Motor neuron (in vitro differentiated cells): ENCODE measurements at regions of chr3 and their contacts with region 1.

Region 1: DNA sequence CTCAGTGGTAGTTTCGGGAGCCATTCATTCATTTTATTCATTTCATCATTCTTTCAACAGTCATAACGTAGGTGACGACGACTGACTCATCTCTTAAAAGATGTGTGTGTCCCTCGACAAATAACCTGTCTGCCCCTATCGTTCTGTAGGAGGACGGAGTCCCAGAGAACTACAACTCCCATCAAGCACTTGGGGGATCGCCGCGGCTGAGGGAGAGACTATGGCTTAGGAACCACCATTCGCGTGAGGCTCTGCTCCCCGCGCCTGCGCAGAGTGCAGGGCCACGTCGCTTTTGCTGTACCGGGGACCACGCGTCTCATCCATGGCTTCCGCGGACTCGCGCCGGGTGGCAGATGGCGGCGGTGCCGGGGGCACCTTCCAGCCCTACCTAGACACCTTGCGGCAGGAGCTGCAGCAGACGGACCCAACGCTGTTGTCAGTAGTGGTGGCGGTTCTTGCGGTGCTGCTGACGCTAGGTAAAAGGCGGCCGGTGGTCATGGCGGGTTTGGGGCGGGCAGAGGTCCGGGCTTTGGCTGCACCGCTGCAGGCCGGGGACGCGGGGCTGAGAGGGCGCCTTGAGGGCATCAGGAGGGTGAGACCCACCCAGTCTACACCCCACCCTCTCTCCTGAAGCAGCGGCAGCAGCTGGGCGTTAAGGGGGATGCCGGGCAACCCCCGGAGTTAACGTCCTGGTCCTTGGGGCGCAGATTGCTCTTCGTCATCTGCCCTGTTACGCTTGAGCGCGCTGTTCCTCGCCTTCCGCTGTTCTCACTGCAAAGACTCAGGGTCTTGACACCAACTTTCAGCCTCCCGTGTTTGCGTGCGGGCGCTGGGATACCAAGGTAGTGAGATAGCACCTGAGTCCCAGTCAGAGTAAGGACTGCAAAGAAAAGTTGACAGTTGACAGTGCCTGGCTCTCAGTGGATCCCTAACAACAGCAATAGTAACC is at the start of gene SRPRB:
- ATAC-seq: peak; percentile 95 to 99 (median 97)
- H3K4me3 ChIP-seq: peak within 1 kb of the TSS; percentile 70 to 94 (median 83)
- H3K27ac ChIP-seq: peak within 1 kb of the TSS; percentile 88 to 96
- H3K4me1 ChIP-seq: peaks cover 0 to 7% of the 10 kb centered on the region in 2 donors
- total RNA-seq, gene SRPRB: 39.2 to 150 (median 62.6) TPM

Region 2: DNA sequence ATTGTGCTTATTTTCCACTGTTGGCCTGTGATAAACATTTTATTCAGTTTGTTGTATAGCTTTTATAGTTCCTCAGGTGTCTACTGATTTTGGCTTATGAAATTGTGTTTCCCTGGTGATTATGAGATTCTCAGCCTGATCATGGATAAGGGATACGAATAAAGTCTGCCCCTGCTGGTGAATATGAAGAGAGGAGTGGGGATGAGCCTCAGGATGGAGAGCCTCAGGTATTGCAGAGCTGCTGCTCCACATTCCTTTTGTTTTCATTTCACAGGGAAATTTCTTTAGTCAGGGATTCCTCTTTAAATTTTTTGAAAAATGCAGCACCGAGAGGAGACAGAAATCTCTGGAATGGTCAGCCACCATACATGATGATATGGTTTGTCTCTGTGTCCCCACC is 104.6 kb after region 1 on chr3:
- in situ Hi-C with region 1: loop called in 2 of 9 experiments (anchors 25 kb)
- ATAC-seq: no peak
- H3K4me3 ChIP-seq: no peak overlapping the region
- H3K27ac ChIP-seq: no peak overlapping the region
- H3K4me1 ChIP-seq: no peaks in the 10 kb centered on the region

Region 3: GRCh38 chr3:133991637-133992036 is 185.8 kb after region 1 on chr3:
- in situ Hi-C with region 1: no loop called
- ATAC-seq: no peak
- H3K4me3 ChIP-seq: no peak overlapping the region
- H3K27ac ChIP-seq: no peak overlapping the region
- H3K4me1 ChIP-seq: no peaks in the 10 kb centered on the region